ENCODE measurements at regions of chr3 and their contacts with region 1.

Region 1: GRCh38 chr3:179309225-179310078 is 13.4 kb upstream of the ZNF639 start:
- DNase-seq: no peak
- ATAC-seq: no peak
- H3K4me3 ChIP-seq: no peak overlapping the region
- H3K27ac ChIP-seq: no peak overlapping the region
- H3K4me1 ChIP-seq: no peaks in the 10 kb centered on the region
- H3K27me3 ChIP-seq: no peaks in the 10 kb centered on the region
- CTCF ChIP-seq: no peak
- POLR2A ChIP-seq: no peak

Region 2: DNA sequence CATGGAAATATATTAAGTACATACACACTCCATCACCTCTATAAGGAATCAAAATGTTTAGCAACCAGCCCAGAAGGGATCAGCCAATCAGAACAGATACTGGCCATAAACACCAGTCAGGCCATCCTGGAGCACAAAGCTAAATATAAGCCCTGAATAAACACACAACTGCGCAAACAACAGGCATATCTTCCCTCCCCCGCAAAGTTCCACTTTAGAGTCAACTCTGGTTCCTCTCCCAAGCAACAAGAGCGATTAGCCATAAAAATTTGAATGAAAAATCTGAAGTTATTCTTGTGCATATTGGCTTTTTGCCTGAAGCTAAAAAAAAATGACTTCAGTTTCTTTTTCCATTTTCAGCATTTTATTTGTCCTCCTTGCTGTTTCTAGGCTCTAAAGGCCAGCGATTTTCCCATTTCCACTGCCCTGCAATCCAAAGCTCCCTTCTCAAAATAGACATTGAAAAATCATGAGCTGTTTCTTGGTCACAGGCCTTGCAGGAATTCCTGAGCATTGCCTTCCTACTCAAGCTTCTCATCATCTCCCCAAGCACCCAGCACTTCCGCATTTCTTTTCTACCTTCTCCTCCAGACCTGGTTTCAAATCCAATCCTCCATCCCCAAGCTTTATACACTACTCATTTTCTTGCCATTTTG is 485.7 kb before region 1 on chr3:
- intact Hi-C with region 1: no loop called
- DNase-seq: no peak
- ATAC-seq: no peak
- H3K4me3 ChIP-seq: no peak overlapping the region
- H3K27ac ChIP-seq: no peak overlapping the region
- H3K4me1 ChIP-seq: no peaks in the 10 kb centered on the region
- H3K27me3 ChIP-seq: no peaks in the 10 kb centered on the region
- CTCF ChIP-seq: no peak
- POLR2A ChIP-seq: no peak

Region 3: DNA sequence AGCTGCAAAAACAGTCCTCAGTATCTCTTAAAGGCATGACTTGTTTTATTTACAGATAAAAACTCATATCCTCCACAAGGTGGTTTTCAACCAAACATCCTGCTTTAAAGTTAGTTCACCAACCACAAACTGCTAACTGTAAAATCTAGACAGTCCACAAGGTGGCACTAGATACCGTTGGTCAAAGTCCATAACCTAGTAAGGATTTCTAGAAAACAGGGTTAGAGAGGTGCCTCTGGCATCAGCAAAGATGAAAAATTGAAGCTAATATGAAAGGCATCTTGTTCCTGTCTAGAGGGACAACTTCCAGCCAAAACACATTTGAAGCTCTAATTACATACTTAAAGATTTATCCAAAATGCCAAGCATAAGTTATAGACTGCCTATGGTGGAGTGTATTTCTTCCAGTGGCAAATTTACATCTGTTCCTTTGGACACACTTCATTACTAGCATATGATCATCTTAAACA is 293.9 kb before region 1 on chr3:
- intact Hi-C with region 1: loop called (anchors 10 kb)
- DNase-seq: peak; percentile 46 to 72 (median 51)
- ATAC-seq: peak; percentile 86
- H3K4me3 ChIP-seq: no peak overlapping the region
- H3K27ac ChIP-seq: no peak overlapping the region
- H3K4me1 ChIP-seq: peaks cover 8% of the 10 kb centered on the region
- H3K27me3 ChIP-seq: no peaks in the 10 kb centered on the region
- CTCF ChIP-seq: peak; percentile 34 to 88 (median 80)
- POLR2A ChIP-seq: no peak

Region 4: GRCh38 chr3:179100652-179101051 is 208.8 kb before region 1 on chr3:
- intact Hi-C with region 1: loop called (anchors 10 kb)
- DNase-seq: no peak
- ATAC-seq: no peak
- H3K4me3 ChIP-seq: no peak overlapping the region
- H3K27ac ChIP-seq: no peak overlapping the region
- H3K4me1 ChIP-seq: no peaks in the 10 kb centered on the region
- H3K27me3 ChIP-seq: no peaks in the 10 kb centered on the region
- CTCF ChIP-seq: no peak
- POLR2A ChIP-seq: no peak